ENCODE measurements at regions of chr7 and their contacts with region 1.

Region 1: DNA sequence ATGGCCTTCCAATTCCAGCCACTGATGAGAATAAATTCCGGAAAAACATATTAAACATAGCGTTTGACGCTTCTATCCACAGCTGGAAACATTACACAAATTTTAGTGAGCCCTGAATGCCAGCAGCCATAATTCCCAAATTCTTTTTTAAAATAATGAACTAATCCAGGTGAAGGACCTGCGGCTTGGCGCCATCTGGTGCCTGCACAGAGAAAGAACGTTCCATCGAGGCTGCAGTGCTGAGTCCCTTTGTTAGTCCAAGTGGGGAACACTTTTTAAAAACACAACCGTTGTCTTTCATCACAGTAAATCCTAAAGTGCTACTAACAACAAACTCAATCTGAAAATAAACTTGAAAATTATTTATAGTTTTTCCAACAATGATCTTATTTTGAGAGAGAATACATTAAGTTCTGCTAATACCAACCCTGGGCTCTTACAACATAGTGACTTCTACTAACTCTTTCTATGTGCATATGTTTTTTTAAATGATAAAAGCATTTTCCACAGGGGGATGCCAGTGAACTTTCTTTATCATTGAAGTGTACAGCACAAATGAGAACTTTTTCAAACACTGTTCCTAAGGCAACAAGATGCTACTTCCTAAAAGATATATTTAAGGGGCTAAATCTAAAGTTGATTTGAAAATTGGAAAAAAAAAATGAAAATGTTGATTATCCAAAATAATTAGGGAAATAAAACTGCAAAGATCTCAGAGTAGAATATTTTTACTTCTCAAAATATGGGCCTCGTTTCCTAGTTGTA is 166.9 kb upstream of the RNF32 start:
- DNase-seq: no peak
- ATAC-seq: no peak
- H3K4me3 ChIP-seq: no peak overlapping the region
- H3K27ac ChIP-seq: no peak overlapping the region
- H3K4me1 ChIP-seq: no peaks in the 10 kb centered on the region
- H3K27me3 ChIP-seq: peaks cover 0 to 43% (median 14%) of the 10 kb centered on the region in 7 donors
- CTCF ChIP-seq: peak; percentile 21 to 77 (median 68)

Region 2: DNA sequence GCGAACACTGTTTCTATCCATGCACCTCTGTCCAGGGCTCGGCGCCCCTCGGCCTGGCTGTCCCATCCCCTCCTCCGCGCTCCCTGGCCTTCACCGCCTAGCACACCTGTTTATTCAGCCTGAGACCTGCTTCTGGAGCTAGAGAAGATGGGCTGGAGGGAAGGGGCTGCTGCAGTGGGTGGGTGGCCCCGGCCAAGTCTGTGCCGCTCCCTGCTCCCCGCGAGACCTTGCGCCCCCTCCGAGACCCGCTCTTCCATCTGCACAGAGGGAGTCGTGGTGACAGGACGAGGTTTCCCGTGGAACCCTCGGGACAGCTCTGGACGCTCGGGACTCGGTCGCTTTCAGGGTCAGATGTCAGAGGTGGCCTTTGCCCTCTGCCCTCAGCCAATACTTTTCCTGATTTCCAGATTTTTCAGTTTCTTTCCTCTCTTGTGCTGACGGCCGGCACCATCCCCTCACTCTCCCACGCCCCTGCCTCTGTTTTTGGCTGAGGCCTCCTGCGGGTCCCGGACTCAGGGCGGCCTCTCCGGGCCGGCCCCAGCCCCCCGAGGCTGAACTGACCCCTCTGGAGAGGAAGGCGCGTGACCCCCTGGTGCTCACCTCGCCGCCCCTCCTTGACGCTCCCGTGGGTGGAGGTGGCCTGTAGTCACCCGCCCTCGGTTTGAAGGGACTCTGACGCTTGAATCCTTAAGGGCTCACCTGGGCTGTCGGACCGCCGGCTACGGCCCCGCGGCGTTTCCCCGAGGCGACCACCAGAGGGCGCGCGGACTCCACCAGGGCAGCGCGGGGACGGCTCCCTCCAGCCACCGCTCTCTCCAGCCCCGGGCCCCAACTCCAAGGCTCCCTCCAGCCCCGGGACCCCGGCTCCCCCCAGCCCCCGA is 677.0 kb before region 1 on chr7:
- intact Hi-C with region 1: loop called in 9 of 10 experiments (anchors 5 kb)
- DNase-seq: peak; percentile 29 to 68
- ATAC-seq: peak; percentile 66 to 83 (median 74)
- H3K4me3 ChIP-seq: no peak overlapping the region
- H3K27ac ChIP-seq: no peak overlapping the region
- H3K4me1 ChIP-seq: peaks cover 0 to 9% (median 3%) of the 10 kb centered on the region in 9 donors
- H3K27me3 ChIP-seq: peaks cover 14 to 65% (median 60%) of the 10 kb centered on the region in 7 donors
- CTCF ChIP-seq: peak; percentile 76 to 94 (median 88)

Region 3: DNA sequence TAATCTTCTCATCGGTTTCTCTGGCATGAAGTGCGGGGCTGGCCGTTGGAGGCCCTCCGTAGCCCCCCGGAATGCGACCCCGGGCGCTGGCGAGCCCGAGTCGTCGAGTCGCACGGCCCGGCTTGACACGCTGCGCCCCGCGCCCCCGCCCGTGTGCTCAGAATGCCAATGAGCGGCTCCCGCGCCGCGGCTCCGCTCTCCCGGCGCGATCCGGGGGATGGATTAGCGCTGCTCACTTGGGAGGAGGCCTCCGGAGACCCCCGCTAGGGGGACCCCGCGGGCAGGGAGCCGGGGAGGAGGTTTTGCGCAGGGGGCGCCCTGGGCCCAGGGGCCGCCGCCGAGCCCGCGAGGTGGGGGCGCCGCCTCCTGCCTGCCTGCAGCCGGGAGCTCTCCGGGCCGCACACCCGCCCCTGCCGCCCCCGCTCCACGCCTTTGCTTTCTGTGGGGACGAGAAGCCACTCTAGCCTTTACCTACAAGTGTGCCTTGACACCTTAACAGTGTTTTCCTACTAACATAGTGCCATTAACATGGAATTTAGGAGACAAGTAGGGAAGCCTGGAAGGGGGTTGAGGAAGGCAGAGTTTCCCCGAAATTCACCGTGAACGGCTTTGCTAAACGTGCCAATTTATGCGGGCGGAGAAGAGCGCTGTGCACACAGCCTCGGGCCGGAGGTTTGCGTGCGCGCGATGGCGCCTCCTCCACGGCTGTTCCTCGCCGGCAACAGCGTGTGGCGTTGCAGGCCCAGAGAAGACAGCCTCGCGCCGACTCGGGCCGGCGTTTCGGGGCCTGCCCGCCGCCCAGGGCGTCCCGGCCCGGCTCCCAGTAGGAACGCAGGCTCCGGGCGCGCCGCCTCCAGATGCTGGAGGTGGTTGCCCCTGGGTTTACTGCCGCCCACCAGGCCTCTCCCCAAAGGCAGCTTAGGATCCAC is 668.5 kb before region 1 on chr7:
- intact Hi-C with region 1: loop called in 3 of 10 experiments (anchors 5 to 10 kb)
- DNase-seq: peak in 1 of 2 donors; percentile 32
- ATAC-seq: peak; percentile 51 to 77 (median 74)
- H3K4me3 ChIP-seq: peak overlapping the region; percentile 11 to 51 (median 36)
- H3K27ac ChIP-seq: no peak overlapping the region
- H3K4me1 ChIP-seq: peaks cover 10 to 62% (median 51%) of the 10 kb centered on the region in 9 donors
- H3K27me3 ChIP-seq: peaks cover 56 to 100% (median 100%) of the 10 kb centered on the region in 7 donors
- CTCF ChIP-seq: peak in 7 of 9 donors; percentile 36 to 66 (median 44)

Region 4: DNA sequence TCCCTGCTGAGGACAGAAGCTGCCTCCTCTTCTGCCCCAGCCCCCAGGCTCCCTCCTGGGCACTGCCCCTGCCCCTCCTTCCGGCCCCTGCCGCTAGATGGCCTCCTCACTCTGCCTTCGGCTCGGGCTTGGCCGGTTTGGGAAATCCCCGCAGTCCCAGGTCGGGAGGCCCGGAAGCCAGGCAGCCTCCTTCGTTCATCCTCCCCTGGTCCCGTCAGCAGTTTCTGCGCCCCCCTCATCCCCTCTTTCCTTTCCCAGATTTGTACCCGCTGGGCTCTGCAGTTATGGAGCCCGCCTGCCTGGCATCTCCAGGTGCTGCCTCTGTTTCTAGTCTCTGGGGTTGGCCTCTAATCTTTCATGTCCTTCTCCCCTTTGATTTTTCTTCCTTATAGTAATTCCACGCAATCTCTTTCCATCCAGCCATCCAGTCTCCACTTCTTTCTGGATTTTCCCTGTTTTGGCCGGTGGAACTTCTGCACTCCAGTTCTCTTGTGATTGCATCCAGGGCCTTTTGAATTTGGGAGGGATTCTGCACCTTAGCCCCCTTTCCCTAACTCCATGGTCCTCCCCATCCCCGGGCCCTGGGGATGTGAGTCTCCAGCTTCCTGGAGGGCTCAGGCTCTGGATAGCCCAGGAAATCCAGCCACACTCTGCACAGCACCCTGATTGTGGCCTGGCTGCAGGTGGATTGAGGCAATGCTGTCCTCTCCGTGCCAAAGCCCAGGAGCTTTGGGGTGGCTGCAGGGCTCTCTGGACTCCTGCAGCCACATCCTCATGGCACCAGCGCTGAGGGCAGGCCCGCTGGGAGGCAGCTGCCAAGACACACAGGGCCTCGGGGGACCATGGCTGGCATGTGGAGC is 658.1 kb before region 1 on chr7:
- intact Hi-C with region 1: loop called in 9 of 10 experiments (anchors 5 to 10 kb)
- DNase-seq: peak; percentile 18 to 44
- ATAC-seq: peak in 7 of 8 donors; percentile 22 to 79 (median 74)
- H3K4me3 ChIP-seq: no peak overlapping the region
- H3K27ac ChIP-seq: no peak overlapping the region
- H3K4me1 ChIP-seq: peaks cover 0 to 16% (median 4%) of the 10 kb centered on the region in 9 donors
- H3K27me3 ChIP-seq: peaks cover 2 to 95% (median 87%) of the 10 kb centered on the region in 7 donors
- CTCF ChIP-seq: peak in 7 of 9 donors; percentile 51 to 65 (median 59)

Region 5: GRCh38 chr7:155824227-155824886 is 649.3 kb before region 1 on chr7:
- intact Hi-C with region 1: loop called in 8 of 10 experiments (anchors 5 to 10 kb)
- DNase-seq: no peak
- ATAC-seq: no peak
- H3K4me3 ChIP-seq: no peak overlapping the region
- H3K27ac ChIP-seq: no peak overlapping the region
- H3K4me1 ChIP-seq: no peaks in the 10 kb centered on the region
- H3K27me3 ChIP-seq: peaks cover 0 to 65% (median 47%) of the 10 kb centered on the region in 7 donors
- CTCF ChIP-seq: no peak

Region 6: GRCh38 chr7:156223935-156224832 is 249.5 kb before region 1 on chr7:
- intact Hi-C with region 1: no loop called
- DNase-seq: no peak
- ATAC-seq: no peak
- H3K4me3 ChIP-seq: no peak overlapping the region
- H3K27ac ChIP-seq: no peak overlapping the region
- H3K4me1 ChIP-seq: no peaks in the 10 kb centered on the region
- H3K27me3 ChIP-seq: peaks cover 0 to 24% (median 9%) of the 10 kb centered on the region in 7 donors
- CTCF ChIP-seq: no peak

Region 7: DNA sequence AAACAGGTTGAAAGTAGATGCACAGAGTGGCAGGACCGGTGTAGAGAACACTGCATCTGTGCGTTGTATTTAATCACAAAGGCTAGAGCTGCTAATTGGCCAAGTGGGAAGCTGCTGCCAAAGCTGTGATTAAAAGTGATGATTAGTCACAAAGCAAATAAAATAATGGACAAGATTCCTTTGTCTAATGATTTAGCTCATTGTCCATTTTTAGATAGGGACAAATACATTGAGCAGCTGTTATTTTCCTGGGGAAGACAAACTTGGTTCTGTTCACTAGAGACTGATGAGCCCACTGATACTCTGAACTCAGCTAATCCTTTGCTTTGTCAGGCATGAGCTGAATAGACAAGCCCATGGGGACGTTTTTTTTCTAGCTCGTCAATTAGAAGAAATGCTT is 684.7 kb after region 1 on chr7:
- intact Hi-C with region 1: no loop called
- DNase-seq: no peak
- ATAC-seq: peak in 3 of 8 donors; percentile 33 to 56 (median 44)
- H3K4me3 ChIP-seq: no peak overlapping the region
- H3K27ac ChIP-seq: peak overlapping the region in 1 of 10 donors; percentile 2
- H3K4me1 ChIP-seq: peaks cover 0 to 32% (median 7%) of the 10 kb centered on the region in 9 donors
- H3K27me3 ChIP-seq: no peaks in the 10 kb centered on the region
- CTCF ChIP-seq: no peak

Measured in heart right ventricle (tissue), 16 donors.